ENCODE measurements at regions of chr18 and their contacts with region 1.

Region 1: DNA sequence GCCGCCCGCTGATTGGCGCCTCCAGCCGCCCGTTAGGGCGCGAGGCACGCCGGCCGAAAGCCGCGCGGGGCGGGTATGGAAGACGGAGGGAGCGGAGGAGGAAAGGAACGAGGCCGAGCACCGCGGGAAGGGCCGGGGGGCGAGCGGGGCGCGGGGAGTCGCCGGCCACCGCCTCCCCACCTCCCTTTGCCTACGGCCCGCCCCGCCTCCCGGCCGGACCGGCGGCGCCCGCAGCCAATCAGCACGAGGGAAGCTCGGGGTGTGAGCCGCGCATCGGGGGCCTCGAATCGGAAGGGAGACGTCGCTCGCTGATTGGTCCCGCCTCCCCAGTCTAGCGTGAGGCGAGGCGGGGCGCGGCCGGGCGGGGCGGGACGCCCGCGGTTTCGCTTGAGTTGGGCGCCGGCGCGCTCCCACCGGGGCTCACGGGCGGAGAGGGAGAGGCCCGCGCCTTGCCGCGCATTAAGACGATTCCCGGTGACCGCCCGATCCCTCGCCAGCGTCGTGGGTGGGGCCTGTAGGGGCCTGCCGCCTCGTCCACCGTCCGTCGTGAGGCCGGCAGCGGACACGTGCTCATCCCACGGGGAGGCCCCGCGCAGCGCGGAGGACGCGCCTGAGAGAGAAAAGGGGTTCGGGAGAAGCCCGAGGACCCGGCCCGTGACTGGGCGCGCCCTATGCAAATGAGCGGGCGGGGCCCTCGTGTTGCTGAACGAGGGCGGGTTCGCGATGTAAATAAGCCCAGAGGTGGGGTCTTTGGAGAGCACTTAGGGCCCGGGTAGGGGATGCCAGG is 665 bp upstream of the SMAD2 start:
- DNase-seq: peak; percentile 93
- H3K4me3 ChIP-seq: peak overlapping the region; percentile 34 to 99 (median 49)
- H3K27ac ChIP-seq: peak overlapping the region; percentile 94
- H3K4me1 ChIP-seq: peaks cover 18% of the 10 kb centered on the region
- H3K27me3 ChIP-seq: peaks cover 9 to 15% of the 10 kb centered on the region in 2 experiments
- CTCF ChIP-seq: no peak
- POLR2A ChIP-seq: no peak

Region 2: GRCh38 chr18:47898696-47899095 is 32.4 kb before region 1 on chr18:
- CTCF ChIA-PET with region 1: interaction called, 4 read pairs
- POLR2A ChIA-PET with region 1: no interaction called
- dilution Hi-C with region 1: no loop called
- intact Hi-C with region 1: loop called (anchors 2 kb)
- DNase-seq: peak; percentile 52
- H3K4me3 ChIP-seq: no peak overlapping the region
- H3K27ac ChIP-seq: no peak overlapping the region
- H3K4me1 ChIP-seq: peaks cover 28% of the 10 kb centered on the region
- H3K27me3 ChIP-seq: no peaks in the 10 kb centered on the region
- CTCF ChIP-seq: no peak
- POLR2A ChIP-seq: no peak

Region 3: GRCh38 chr18:48002933-48003365 is 71.8 kb after region 1 on chr18:
- CTCF ChIA-PET with region 1: interaction called, 4 read pairs
- POLR2A ChIA-PET with region 1: interaction called, 4 read pairs
- dilution Hi-C with region 1: no loop called
- intact Hi-C with region 1: loop called (anchors 1 kb)
- DNase-seq: peak; percentile 78
- H3K4me3 ChIP-seq: no peak overlapping the region
- H3K27ac ChIP-seq: peak overlapping the region; percentile 86
- H3K4me1 ChIP-seq: peaks cover 20% of the 10 kb centered on the region
- H3K27me3 ChIP-seq: no peaks in the 10 kb centered on the region
- CTCF ChIP-seq: no peak
- POLR2A ChIP-seq: no peak

Region 4: DNA sequence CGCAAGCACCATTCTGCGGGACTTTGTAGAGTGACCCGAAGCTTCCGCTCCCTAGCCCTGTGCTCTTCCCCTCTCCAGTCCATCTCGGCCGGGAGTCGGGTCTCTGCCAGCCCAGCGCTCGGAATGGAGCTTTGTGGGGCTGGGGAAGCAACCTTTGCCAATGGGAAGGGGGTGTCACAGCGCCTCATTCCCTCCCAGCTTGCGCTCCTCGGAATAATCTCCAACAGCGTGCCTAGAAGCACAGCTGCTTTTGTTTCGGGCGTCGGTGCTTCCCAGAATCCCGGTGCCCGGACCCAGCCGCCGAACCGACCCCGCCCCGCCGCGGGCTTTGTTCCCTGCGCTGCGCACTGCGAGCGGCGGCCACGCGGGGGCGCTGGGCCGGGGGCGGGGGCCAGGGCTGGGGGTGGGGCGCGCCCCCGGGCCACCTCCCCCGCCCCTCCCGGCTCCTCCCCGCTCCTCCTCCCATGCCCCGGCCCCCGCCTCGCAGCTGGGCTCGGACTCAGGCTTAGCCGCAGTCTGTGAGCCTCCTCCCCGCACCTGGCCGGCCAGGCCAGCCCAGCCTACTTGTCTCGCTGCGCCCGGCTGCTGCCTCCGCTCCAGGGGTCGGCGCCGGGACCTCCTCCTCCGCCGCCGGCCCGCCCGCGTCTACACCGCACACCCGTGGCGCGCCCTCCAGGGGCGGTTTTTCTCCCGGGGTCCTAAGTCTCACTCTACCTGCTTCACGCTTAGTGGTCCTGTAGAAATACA is 77.0 kb after region 1 on chr18:
- CTCF ChIA-PET with region 1: interaction called, 4 read pairs
- POLR2A ChIA-PET with region 1: interaction called, 4 read pairs
- dilution Hi-C with region 1: no loop called
- intact Hi-C with region 1: loop called (anchors 1 kb)
- DNase-seq: peak; percentile 51
- H3K4me3 ChIP-seq: peak overlapping the region; percentile 48 to 70 (median 62)
- H3K27ac ChIP-seq: peak overlapping the region; percentile 51
- H3K4me1 ChIP-seq: peaks cover 26% of the 10 kb centered on the region
- H3K27me3 ChIP-seq: peaks cover 3 to 7% of the 10 kb centered on the region in 2 experiments
- CTCF ChIP-seq: peak; percentile 31 to 53
- POLR2A ChIP-seq: peak; percentile 66

Region 5: DNA sequence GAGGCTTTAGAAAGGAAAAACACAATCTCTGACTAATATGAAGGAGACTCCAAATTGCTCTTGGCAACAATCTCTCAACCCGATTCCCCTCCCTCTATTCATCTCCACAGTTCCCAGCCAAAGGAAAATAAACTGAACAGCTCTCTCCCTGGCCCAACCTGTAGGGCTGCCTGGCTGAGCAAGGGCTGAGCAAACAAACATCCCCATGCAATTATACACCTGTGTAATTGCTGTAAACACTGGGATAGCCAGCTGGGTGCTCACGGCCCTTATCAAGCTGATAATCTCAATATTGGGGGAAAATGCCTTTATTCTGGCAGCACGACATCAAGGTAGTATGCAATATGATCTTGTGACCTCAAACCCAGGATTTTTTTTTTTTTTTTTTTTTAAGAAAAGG is 202.6 kb after region 1 on chr18:
- CTCF ChIA-PET with region 1: no interaction called
- POLR2A ChIA-PET with region 1: no interaction called
- dilution Hi-C with region 1: no loop called
- intact Hi-C with region 1: no loop called
- DNase-seq: no peak
- H3K4me3 ChIP-seq: no peak overlapping the region
- H3K27ac ChIP-seq: no peak overlapping the region
- H3K4me1 ChIP-seq: no peaks in the 10 kb centered on the region
- H3K27me3 ChIP-seq: peaks cover 38 to 42% of the 10 kb centered on the region in 2 experiments
- CTCF ChIP-seq: no peak
- POLR2A ChIP-seq: no peak